H1 (cell line): ENCODE measurements at regions of chr6 and their contacts with region 1.

Region 1: GRCh38 chr6:109440331-109441068 is at the starts of genes PPIL6 and SMPD2:
- DNase-seq: peak; percentile 67 to 86
- H3K4me3 ChIP-seq: peak within 1 kb of the TSS; percentile 76 to 92 (median 90)
- H3K27ac ChIP-seq: peak within 1 kb of the TSS; percentile 56
- H3K4me1 ChIP-seq: peaks cover 2 to 9% (median 5%) of the 10 kb centered on the region in 4 experiments
- H3K27me3 ChIP-seq: peaks cover 0 to 2% (median 0%) of the 10 kb centered on the region in 4 experiments; a peak in 1 of 7 replicates
- CTCF ChIP-seq: peak in 1 of 3 experiments; percentile 16; a peak in 1 of 4 replicates
- EP300 ChIP-seq: no peak
- POLR2A ChIP-seq: peak in 1 of 2 experiments; percentile 54; a peak in 2 of 3 replicates
- RAD21 ChIP-seq: no peak; a peak in 1 of 4 replicates
- total RNA-seq, gene PPIL6: 1.3 and 1.5 TPM in 2 replicates
- total RNA-seq, gene SMPD2: 10.5 and 11.5 TPM in 2 replicates

Region 2: DNA sequence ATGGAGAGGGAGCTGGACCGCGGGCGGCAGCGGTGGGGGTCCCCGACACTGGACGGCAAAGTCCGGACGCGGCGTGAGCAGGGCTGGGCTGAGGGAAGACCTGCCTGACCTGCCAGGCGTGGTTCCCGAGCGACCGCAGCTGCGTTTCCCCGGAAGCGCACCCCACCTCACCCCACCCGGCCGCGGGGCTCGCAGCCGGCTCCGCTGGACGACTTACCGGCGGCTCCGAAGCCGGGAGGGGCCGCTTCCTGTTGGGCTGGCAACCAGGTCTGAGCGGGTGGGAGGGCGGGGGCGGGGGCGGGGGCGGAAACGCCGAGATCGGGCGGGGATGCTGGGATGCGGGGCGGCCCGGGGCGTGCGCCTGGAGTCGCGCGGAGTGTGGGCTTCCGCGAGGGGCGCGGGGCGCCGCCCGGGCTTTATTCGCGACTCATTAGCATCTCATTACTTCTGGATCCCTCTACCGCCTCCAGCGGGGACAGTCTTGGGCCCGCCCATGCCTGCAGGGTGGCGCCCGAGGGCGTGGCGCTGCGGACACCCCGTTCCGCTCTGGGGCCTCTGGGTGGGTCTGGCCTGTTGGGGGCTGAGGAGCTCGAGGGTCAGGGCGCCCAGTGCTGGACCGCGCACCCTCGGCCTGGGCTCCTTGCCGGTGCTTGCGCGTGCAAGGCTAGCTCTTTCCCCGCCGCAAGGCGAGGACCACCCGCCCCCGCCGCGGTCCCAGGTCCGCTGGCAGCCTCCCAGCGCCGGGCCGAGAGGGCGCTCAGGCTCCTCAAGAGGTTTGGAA is 15.2 kb after region 1 on chr6 and contains the start of gene MICAL1:
- CTCF ChIA-PET with region 1: interaction called, 63 read pairs
- POLR2A ChIA-PET with region 1: interaction called, 85 read pairs
- DNase-seq: peak in 1 of 2 experiments; percentile 84
- H3K4me3 ChIP-seq: peak within 1 kb of the TSS; percentile 60 to 91 (median 84)
- H3K27ac ChIP-seq: no peak within 1 kb of the TSS
- H3K4me1 ChIP-seq: peaks cover 4 to 17% (median 11%) of the 10 kb centered on the region in 4 experiments
- H3K27me3 ChIP-seq: no peaks in the 10 kb centered on the region
- CTCF ChIP-seq: peak in 2 of 3 experiments; percentile 15 to 17; a peak in 2 of 4 replicates
- EP300 ChIP-seq: no peak
- POLR2A ChIP-seq: peak in 1 of 2 experiments; percentile 51; a peak in 1 of 3 replicates
- RAD21 ChIP-seq: no peak
- total RNA-seq, gene MICAL1: 51.3 and 55.4 TPM in 2 replicates

Region 3: GRCh38 chr6:109465772-109466171 is 25.3 kb after region 1 on chr6:
- CTCF ChIA-PET with region 1: interaction called, 4 read pairs
- POLR2A ChIA-PET with region 1: interaction called, 10 read pairs
- DNase-seq: no peak
- H3K4me3 ChIP-seq: no peak overlapping the region
- H3K27ac ChIP-seq: no peak overlapping the region
- H3K4me1 ChIP-seq: no peaks in the 10 kb centered on the region
- H3K27me3 ChIP-seq: no peaks in the 10 kb centered on the region
- CTCF ChIP-seq: no peak
- EP300 ChIP-seq: no peak
- POLR2A ChIP-seq: no peak
- RAD21 ChIP-seq: no peak

Region 4: DNA sequence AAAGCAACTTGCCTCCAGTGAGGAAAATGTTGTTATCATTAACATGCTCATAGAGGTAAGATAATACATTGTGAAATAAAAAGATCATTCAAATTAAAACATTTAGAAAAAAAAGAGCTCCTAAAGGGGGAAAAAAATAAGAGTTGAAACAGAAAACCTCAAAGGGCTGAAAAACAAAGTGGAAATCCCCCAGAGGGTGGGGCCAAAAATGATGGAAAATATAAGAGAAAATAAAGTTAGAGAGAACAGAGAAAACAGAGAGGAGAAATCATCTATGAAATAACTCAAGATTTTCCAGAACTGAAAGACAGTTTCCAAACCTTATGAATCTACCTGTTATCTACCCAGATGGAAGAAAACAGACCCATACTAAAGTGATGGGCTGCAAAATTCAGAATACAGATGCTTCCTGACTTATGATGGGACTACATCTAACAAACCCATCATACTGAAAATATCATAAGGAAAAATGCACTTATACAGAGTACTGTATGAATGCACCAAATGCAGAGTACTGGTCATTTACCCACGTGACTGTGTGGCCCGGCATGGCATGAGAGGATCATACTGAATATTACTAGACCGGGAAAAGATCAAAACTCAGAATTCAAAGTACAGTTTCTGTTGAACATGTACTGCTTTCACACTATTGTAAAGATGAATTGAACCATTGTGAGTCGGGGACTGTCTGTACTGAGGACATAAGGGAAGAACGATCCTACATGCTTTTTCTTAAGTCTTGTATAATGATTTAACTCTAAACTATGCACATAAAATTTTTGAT is 38.5 kb after region 1 on chr6:
- CTCF ChIA-PET with region 1: interaction called, 6 read pairs
- POLR2A ChIA-PET with region 1: interaction called, 10 read pairs
- DNase-seq: no peak
- H3K4me3 ChIP-seq: peak overlapping the region in 2 of 4 experiments; percentile 31 to 48; a peak in 3 of 8 replicates
- H3K27ac ChIP-seq: no peak overlapping the region
- H3K4me1 ChIP-seq: peaks cover 2 to 15% (median 4%) of the 10 kb centered on the region in 4 experiments; a peak in 5 of 7 replicates
- H3K27me3 ChIP-seq: no peaks in the 10 kb centered on the region
- CTCF ChIP-seq: no peak
- EP300 ChIP-seq: no peak
- POLR2A ChIP-seq: no peak
- RAD21 ChIP-seq: no peak